Left colon (tissue), 2 donors: ENCODE measurements at regions of chr5 and their contacts with region 1.

Region 1: DNA sequence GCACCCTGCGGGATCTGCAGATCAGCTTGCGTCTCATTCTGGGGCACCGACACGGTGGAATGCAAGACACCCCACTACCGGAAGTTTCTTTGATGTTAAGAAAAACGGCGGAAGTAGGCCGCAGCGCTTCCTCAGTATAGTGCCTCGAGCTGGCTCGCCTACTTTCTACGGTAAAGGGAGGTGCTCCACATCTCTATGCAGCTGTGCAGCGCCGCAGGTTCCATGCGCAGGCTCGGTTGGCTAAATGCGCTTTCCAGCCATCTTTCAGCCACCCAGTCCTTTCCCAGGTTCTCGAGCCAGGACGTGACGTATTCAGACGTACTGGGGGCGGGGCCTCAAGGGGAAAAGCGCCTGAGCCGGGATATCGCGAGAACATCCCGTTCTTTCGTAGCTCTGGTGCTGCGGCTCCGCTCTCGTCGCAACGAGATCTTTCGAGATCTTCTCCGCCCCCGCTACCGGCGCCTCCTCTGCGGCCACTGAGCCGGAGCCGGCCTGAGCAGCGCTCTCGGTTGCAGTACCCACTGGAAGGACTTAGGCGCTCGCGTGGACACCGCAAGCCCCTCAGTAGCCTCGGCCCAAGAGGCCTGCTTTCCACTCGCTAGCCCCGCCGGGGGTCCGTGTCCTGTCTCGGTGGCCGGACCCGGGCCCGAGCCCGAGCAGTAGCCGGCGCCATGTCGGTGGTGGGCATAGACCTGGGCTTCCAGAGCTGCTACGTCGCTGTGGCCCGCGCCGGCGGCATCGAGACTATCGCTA is at the start of gene HSPA4:
- DNase-seq: peak; percentile 98 to 99
- ATAC-seq: peak; percentile 87
- total RNA-seq, gene HSPA4: 71.6 to 80.1 TPM

Region 2: GRCh38 chr5:132692632-132692967 is 359.2 kb before region 1 on chr5:
- intact Hi-C with region 1: no loop called
- DNase-seq: no peak
- ATAC-seq: no peak

Region 3: GRCh38 chr5:132951897-132952296 is 99.9 kb before region 1 on chr5:
- intact Hi-C with region 1: no loop called
- DNase-seq: no peak
- ATAC-seq: no peak

Region 4: DNA sequence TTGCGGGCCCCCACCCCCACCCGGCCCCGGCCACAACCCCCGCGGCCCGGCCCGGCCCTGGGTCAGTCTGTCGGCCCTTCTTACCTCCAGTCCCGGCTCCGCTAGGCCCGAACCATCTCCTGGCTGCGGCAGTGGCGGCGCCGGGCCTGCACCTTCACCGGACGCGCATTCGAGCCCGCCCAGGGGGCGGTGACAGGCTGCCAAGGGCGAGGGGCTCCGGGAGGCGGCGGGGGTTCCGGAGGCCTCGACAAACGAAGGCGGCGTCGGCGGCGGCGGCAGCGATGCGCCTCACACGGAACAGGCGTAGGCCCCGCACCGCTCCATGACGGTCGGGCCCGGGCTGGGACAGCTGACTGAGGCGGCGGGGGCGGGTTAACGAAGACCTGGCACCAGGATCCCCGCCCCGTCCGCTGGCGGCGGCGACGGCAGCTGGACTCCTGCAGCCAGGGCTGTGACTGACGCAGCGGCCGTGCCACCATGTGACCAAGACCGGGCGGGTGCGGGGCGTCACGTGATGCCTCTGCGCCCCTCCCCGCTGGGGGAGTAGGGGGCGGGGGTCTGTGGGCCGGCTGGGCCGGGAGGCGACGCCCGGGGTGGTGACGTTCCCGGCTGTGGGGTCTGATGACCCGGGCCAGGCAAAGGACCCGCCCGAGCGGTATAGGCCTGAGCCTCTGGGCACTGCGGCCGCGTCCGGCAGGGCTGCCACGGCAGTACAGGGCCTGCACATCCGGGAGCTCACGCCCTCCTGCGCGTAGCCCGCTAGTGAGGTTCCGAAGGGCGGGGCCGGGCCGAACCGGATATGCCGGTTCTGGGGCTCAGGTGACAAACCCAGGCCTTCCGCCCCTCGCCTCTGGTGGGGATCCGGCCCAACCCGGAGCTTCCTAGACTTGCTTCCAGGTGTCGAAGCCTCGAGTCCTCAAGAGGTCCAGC is 88.3 kb before region 1 on chr5 and contains the start of gene AFF4:
- intact Hi-C with region 1: loop called in 1 of 2 experiments (anchors 10 kb)
- DNase-seq: peak; percentile 96 to 97
- ATAC-seq: peak; percentile 92
- total RNA-seq, gene AFF4: 65.2 to 74.7 TPM